Ascending aorta (tissue), 2 donors: ENCODE measurements at regions of chr15 and their contacts with region 1.

Region 1: DNA sequence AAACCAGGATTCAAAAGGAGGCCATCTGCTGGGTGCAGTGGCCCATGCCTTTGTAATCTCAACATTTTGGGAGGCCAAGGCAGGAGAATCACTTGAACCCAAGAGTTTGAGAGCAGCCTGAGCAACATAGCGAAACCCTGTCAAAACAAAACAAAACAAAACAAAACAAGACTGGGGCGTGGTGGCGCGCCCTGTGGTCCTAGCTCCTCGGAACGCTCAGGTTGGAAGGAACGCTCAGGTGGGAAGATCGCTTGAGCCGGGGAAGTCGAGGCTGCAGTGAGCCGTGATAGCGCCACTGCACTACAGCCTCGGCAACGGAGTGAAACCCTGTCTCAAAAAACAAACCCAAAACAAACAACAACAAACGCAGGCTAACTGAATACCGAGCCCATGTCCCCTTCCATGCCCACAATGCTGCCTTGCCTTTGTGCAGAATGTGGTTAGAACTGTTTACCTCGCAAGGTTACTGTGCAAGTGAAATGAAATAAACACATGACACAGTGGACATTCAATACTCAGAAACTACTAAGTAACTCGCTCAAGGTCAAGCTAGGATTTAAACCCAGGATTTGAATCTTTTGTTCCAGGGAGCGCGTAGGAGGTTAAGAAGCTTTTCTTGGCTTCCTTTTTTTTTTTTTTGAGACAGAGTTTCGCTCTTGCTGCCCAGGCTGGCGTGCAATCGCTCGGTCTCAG is 766 bp upstream of the EMC4 start:
- DNase-seq: no peak
- H3K4me3 ChIP-seq: peak overlapping the region; percentile 65 to 90
- H3K27ac ChIP-seq: peak overlapping the region; percentile 80 to 81
- H3K4me1 ChIP-seq: peaks cover 5 to 10% of the 10 kb centered on the region in 2 donors
- H3K27me3 ChIP-seq: no peaks in the 10 kb centered on the region
- CTCF ChIP-seq: no peak

Region 2: DNA sequence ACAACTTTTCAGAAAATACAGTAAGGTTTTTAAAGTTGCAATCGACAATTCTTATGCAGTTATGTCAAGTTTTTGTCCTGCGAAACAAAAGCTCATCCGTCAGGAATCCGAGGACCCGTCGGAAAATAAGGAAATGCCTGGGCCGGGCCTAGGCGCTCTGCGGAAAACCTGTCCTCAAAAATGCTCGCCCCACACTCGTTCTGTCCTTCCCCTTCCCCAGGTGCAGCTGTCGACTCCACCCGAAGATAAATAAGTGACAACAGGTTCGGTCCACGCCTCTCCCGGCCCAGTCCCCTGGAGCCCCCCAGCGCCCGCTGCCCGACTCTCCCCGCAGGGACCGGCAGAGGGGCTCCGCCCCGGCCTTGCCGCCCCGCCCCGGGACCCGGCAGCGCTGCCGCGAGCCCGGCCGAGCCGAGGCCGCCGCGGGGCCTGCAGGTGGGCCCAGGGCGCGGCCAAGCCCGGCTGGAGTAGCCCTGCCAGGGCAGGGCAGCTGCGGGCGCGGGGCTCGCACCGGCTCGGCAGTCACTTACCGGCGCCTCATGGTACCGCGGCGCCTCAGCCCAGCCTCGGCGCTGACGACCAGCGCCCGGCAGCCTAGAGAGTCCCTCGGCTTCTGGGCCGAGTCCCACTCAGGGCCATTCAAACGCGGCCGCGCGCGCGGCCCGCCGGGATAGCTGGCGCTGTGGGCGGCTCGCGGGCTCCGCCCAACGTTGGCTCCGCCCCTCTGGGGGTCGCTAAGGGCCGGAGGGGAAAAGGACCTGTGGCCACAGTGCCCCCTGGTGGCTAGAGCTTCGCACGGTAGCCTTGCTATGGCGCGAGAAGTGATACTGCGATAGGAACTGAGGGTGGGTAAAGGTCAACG is 14.4 kb before region 1 on chr15 and contains the start of gene KATNBL1:
- intact Hi-C with region 1: loop called (anchors 1 kb)
- DNase-seq: peak; percentile 82 to 97
- H3K4me3 ChIP-seq: peak within 1 kb of the TSS; percentile 92
- H3K27ac ChIP-seq: peak within 1 kb of the TSS; percentile 80 to 86
- H3K4me1 ChIP-seq: peaks cover 0 to 10% of the 10 kb centered on the region in 2 donors
- H3K27me3 ChIP-seq: no peaks in the 10 kb centered on the region
- CTCF ChIP-seq: peak; percentile 85 to 94 (median 94)
- total RNA-seq, gene KATNBL1: 34.3 TPM

Region 3: DNA sequence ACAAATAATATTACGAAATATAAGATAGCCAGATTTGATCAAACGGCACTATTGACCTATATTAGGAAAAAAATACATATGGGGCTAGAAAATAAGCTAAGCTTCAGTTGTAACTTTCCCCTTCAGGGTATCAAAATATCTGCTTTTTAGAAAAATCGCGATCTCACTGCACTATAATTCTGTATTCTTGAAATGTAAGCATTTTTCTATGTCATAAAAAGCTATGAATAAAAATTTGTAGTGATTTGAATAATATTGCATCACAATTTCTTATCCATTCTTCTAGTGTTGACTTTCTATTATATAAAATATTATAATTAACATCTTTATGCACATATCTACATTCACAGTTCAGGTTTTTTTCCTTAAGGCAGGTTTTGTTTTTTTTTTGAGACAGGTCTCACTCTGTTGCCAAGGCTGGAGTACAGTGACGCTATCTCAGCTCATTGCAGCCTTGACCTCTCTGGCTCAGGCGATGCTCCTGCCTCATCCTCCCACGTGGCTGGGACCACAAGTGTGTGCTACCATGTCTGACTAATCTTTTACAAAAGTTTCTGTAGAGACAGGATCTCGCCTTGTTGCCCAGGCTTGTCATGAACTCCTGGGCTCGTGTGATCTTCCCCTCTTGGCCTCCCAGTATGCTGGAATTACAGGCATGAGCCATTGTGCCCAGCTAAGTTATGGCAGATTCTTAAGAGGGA is 22.4 kb after region 1 on chr15:
- intact Hi-C with region 1: no loop called
- DNase-seq: no peak
- H3K4me3 ChIP-seq: no peak overlapping the region
- H3K27ac ChIP-seq: no peak overlapping the region
- H3K4me1 ChIP-seq: no peaks in the 10 kb centered on the region
- H3K27me3 ChIP-seq: no peaks in the 10 kb centered on the region
- CTCF ChIP-seq: no peak

Region 4: GRCh38 chr15:34337557-34338306 is 113.7 kb after region 1 on chr15 and contains the start of gene SLC12A6:
- intact Hi-C with region 1: loop called (anchors 2 kb)
- DNase-seq: peak; percentile 59 to 95
- H3K4me3 ChIP-seq: peak within 1 kb of the TSS; percentile 71 to 99
- H3K27ac ChIP-seq: peak within 1 kb of the TSS; percentile 74 to 90
- H3K4me1 ChIP-seq: peaks cover 10 to 25% of the 10 kb centered on the region in 2 donors
- H3K27me3 ChIP-seq: no peaks in the 10 kb centered on the region
- CTCF ChIP-seq: no peak
- total RNA-seq, gene SLC12A6: 65.8 TPM

Region 5: GRCh38 chr15:34587717-34588674 is 363.9 kb after region 1 on chr15:
- intact Hi-C with region 1: loop called (anchors 5 kb)
- DNase-seq: peak in 1 of 2 donors; percentile 85
- H3K4me3 ChIP-seq: peak overlapping the region; percentile 28 to 51
- H3K27ac ChIP-seq: peak overlapping the region; percentile 3 to 50
- H3K4me1 ChIP-seq: peaks cover 5 to 7% of the 10 kb centered on the region in 2 donors
- H3K27me3 ChIP-seq: no peaks in the 10 kb centered on the region
- CTCF ChIP-seq: peak; percentile 74 to 84 (median 75)

Region 6: GRCh38 chr15:34721802-34722795 is 498.0 kb after region 1 on chr15:
- intact Hi-C with region 1: loop called (anchors 10 kb)
- DNase-seq: peak; percentile 61 to 94
- H3K4me3 ChIP-seq: peak overlapping the region; percentile 35 to 41
- H3K27ac ChIP-seq: peak overlapping the region; percentile 86 to 93
- H3K4me1 ChIP-seq: peaks cover 0 to 51% of the 10 kb centered on the region in 2 donors
- H3K27me3 ChIP-seq: no peaks in the 10 kb centered on the region
- CTCF ChIP-seq: peak; percentile 10 to 46 (median 25)

Region 7: GRCh38 chr15:34987985-34988873 is 764.2 kb after region 1 on chr15 and contains the start of gene ZNF770:
- intact Hi-C with region 1: loop called (anchors 1 kb)
- DNase-seq: peak in 1 of 2 donors; percentile 86
- H3K4me3 ChIP-seq: peak within 1 kb of the TSS; percentile 71 to 85
- H3K27ac ChIP-seq: peak within 1 kb of the TSS; percentile 95 to 97
- H3K4me1 ChIP-seq: peaks cover 0 to 24% of the 10 kb centered on the region in 2 donors
- H3K27me3 ChIP-seq: no peaks in the 10 kb centered on the region
- CTCF ChIP-seq: no peak
- total RNA-seq, gene ZNF770: 87.7 TPM